K562 (cell line): ENCODE measurements at regions of chr19 and their contacts with region 1.

Region 1: DNA sequence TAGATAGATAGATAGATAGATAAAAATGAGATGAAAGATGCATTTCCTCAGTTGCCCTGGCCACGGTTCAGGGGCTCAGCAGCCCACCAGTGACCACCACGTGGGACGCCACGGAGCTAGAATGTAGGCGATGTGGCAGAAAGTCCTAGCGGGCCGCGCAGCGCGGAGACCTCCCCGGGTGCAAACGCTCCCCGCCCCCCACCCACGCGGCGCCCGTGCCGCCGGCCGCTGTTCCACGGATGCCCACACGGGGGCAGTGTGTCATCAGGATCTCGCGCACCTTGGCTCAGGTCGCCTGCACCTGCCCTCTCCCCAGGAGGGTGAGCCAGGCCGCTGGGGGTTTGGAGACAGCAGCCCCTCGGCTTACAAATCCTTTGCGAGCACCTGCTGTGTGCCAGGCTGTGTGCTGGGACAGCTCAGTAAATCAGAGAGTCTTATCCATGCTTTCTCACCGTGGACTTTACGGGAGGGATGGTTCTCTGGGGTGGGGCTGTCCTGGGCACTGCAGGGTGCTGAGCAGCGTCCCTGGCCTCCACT is 13.7 kb upstream of the TLE5 start:
- DNase-seq: peak; percentile 75 to 86 (median 81)
- ATAC-seq: peak; percentile 74
- H3K4me3 ChIP-seq: no peak overlapping the region
- H3K27ac ChIP-seq: no peak overlapping the region
- H3K4me1 ChIP-seq: peaks cover 8 to 17% of the 10 kb centered on the region in 2 experiments; a peak in 3 of 5 replicates
- H3K27me3 ChIP-seq: no peaks in the 10 kb centered on the region
- CTCF ChIP-seq: peak; percentile 85 to 92 (median 91)
- EP300 ChIP-seq: no peak
- POLR2A ChIP-seq: no peak
- RAD21 ChIP-seq: peak; percentile 82 to 85

Region 2: GRCh38 chr19:2962045-2962561 is 113.9 kb before region 1 on chr19:
- CTCF ChIA-PET with region 1: interaction called, 6 read pairs
- POLR2A ChIA-PET with region 1: no interaction called
- in situ Hi-C with region 1: no loop called
- intact Hi-C with region 1: loop called (anchors 1 kb)
- DNase-seq: peak; percentile 66 to 81 (median 66)
- ATAC-seq: peak; percentile 81
- H3K4me3 ChIP-seq: no peak overlapping the region
- H3K27ac ChIP-seq: peak overlapping the region; percentile 44; the same call in 1 of the 3 replicates
- H3K4me1 ChIP-seq: peaks cover 0 to 2% of the 10 kb centered on the region in 2 experiments; a peak in 1 of 5 replicates
- H3K27me3 ChIP-seq: no peaks in the 10 kb centered on the region
- CTCF ChIP-seq: peak; percentile 71 to 96 (median 83)
- EP300 ChIP-seq: peak; percentile 21; the same call in 1 of the 2 replicates
- POLR2A ChIP-seq: no peak
- RAD21 ChIP-seq: peak; percentile 94 to 96

Region 3: GRCh38 chr19:3163230-3163886 is 87.4 kb after region 1 on chr19:
- CTCF ChIA-PET with region 1: interaction called, 5 read pairs
- POLR2A ChIA-PET with region 1: no interaction called
- in situ Hi-C with region 1: no loop called
- intact Hi-C with region 1: loop called (anchors 2 kb)
- DNase-seq: peak; percentile 85 to 91 (median 90)
- ATAC-seq: peak; percentile 99
- H3K4me3 ChIP-seq: no peak overlapping the region
- H3K27ac ChIP-seq: no peak overlapping the region
- H3K4me1 ChIP-seq: peaks cover 4 to 13% of the 10 kb centered on the region in 2 experiments; a peak in 3 of 5 replicates
- H3K27me3 ChIP-seq: no peaks in the 10 kb centered on the region
- CTCF ChIP-seq: peak; percentile 94 to 95 (median 95)
- EP300 ChIP-seq: no peak
- POLR2A ChIP-seq: no peak
- RAD21 ChIP-seq: peak; percentile 90 to 95

Region 4: GRCh38 chr19:3270902-3271301 is 194.9 kb after region 1 on chr19:
- CTCF ChIA-PET with region 1: no interaction called
- POLR2A ChIA-PET with region 1: no interaction called
- in situ Hi-C with region 1: no loop called
- intact Hi-C with region 1: no loop called
- DNase-seq: peak; percentile 62 to 84 (median 72)
- ATAC-seq: no peak
- H3K4me3 ChIP-seq: no peak overlapping the region
- H3K27ac ChIP-seq: no peak overlapping the region
- H3K4me1 ChIP-seq: peaks cover 5 to 25% of the 10 kb centered on the region in 2 experiments; a peak in 4 of 5 replicates
- H3K27me3 ChIP-seq: peaks cover 0 to 22% of the 10 kb centered on the region in 2 experiments; a peak in 2 of 5 replicates
- CTCF ChIP-seq: no peak
- EP300 ChIP-seq: no peak
- POLR2A ChIP-seq: no peak
- RAD21 ChIP-seq: no peak